ENCODE measurements at regions of chr16 and their contacts with region 1.

Region 1: DNA sequence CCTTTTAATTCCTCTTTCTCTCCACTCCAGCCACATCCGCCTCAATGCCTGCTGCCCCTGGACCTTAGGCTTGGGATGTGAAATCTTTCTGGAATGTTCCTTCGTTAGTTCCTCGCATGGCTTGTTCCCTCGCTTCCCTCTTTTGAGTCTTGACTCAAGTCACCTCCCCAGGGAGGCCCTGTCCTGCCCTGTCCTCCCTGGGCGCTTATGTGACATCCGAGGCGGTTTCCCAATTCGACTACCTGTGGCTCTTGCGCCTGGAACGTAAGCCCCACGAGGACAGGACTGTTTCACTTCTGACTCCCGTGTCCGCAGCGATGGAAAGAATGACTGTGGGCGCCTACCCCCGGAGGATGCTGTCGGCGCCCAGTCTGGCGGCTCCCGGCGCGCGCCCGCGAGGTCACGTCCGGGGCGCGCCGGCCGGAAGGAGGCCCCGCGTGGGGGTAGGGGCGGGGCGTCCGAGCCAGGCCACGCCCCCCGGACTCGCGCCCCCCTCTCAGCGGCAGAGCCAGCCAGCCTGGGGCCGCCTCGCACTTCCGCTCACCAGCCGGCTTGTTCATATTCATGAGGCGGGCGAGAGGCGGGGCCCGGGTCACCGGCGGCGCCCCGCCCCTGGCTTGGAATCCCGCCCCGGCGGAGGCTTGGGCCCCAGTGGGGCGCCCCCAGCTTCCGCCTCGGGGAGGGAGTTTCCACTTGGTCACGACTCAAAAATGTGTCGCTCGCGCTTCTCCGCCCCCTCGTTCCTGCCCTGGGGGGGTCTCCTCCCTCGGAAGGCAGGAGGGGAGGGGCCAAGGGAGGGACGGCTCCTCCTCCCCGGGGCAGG is 8.4 kb upstream of the GLIS2 start:
- DNase-seq: peak; percentile 98
- ATAC-seq: peak; percentile 86
- H3K4me3 ChIP-seq: peak overlapping the region; percentile 58 to 95 (median 72)
- H3K4me3 Mint-ChIP-seq: peak overlapping the region; percentile 96
- H3K27ac ChIP-seq: peak overlapping the region; percentile 89 to 91
- H3K27ac Mint-ChIP-seq: peak overlapping the region; percentile 96
- H3K4me1 ChIP-seq: peaks cover 14 to 38% of the 10 kb centered on the region in 2 donors
- H3K4me1 Mint-ChIP-seq: peaks cover 35% of the 10 kb centered on the region
- H3K27me3 ChIP-seq: peaks cover 0 to 2% (median 0%) of the 10 kb centered on the region in 4 experiments
- H3K27me3 Mint-ChIP-seq: no peaks in the 10 kb centered on the region
- CTCF ChIP-seq: no peak

Region 2: GRCh38 chr16:4239020-4239419 is 68.4 kb before region 1 on chr16:
- CTCF ChIA-PET with region 1: no interaction called
- POLR2A ChIA-PET with region 1: no interaction called
- intact Hi-C with region 1: no loop called
- DNase-seq: no peak
- ATAC-seq: no peak
- H3K4me3 ChIP-seq: no peak overlapping the region
- H3K4me3 Mint-ChIP-seq: no peak overlapping the region
- H3K27ac ChIP-seq: no peak overlapping the region
- H3K27ac Mint-ChIP-seq: no peak overlapping the region
- H3K4me1 ChIP-seq: no peaks in the 10 kb centered on the region
- H3K4me1 Mint-ChIP-seq: no peaks in the 10 kb centered on the region
- H3K27me3 ChIP-seq: peaks cover 0 to 12% (median 4%) of the 10 kb centered on the region in 4 experiments
- H3K27me3 Mint-ChIP-seq: peaks cover 18% of the 10 kb centered on the region
- CTCF ChIP-seq: no peak

Region 3: DNA sequence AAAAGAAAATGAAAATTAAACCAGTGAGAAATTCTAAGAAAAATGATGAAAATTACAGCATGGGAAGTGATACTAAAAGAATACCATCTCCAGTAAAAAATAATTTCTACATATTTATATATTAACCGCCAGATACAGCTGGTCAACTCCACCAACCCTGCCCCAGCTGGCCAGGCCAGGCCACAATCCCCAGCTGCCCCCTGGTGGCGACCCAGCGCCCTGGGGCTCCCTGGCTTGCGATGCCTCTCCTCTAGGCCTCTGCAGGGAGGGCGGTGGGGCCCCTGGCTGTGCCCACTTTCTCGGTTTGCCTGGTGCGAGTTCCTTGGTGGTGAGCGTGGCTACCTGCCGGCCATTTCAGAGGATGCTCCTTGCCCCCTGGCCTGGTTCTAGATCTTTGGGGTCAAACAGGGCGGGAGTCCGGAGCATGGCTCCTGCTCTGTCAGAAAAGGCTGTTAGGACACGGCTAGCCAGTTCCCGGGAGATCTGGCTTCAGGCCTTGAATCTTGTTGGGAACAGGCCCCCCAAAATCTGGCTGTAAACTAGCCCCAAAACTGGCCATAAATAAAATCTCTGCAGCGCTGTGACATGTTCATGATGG is 22.9 kb after region 1 on chr16:
- CTCF ChIA-PET with region 1: interaction called, 165 read pairs
- POLR2A ChIA-PET with region 1: no interaction called
- intact Hi-C with region 1: loop called (anchors 2 kb)
- DNase-seq: peak; percentile 74
- ATAC-seq: peak; percentile 72
- H3K4me3 ChIP-seq: no peak overlapping the region
- H3K4me3 Mint-ChIP-seq: no peak overlapping the region
- H3K27ac ChIP-seq: no peak overlapping the region
- H3K27ac Mint-ChIP-seq: no peak overlapping the region
- H3K4me1 ChIP-seq: peaks cover 14 to 18% of the 10 kb centered on the region in 2 donors
- H3K4me1 Mint-ChIP-seq: peaks cover 6% of the 10 kb centered on the region
- H3K27me3 ChIP-seq: peaks cover 0 to 24% (median 0%) of the 10 kb centered on the region in 4 experiments
- H3K27me3 Mint-ChIP-seq: peaks cover 3% of the 10 kb centered on the region
- CTCF ChIP-seq: peak; percentile 98

Region 4: GRCh38 chr16:4416200-4417032 is 109.0 kb after region 1 on chr16 and contains the start of gene CORO7:
- CTCF ChIA-PET with region 1: interaction called, 3 read pairs
- POLR2A ChIA-PET with region 1: interaction called, 4 read pairs
- intact Hi-C with region 1: loop called (anchors 1 kb)
- DNase-seq: peak; percentile 99
- ATAC-seq: peak; percentile 90
- H3K4me3 ChIP-seq: peak within 1 kb of the TSS; percentile 62 to 94 (median 78)
- H3K4me3 Mint-ChIP-seq: peak within 1 kb of the TSS; percentile 96
- H3K27ac ChIP-seq: peak within 1 kb of the TSS; percentile 91 to 95
- H3K27ac Mint-ChIP-seq: peak within 1 kb of the TSS; percentile 95
- H3K4me1 ChIP-seq: peaks cover 24 to 35% of the 10 kb centered on the region in 2 donors
- H3K4me1 Mint-ChIP-seq: peaks cover 31% of the 10 kb centered on the region
- H3K27me3 ChIP-seq: no peaks in the 10 kb centered on the region
- H3K27me3 Mint-ChIP-seq: no peaks in the 10 kb centered on the region
- CTCF ChIP-seq: no peak
- total RNA-seq, gene CORO7: 114 and 117 TPM in 2 replicates

Region 5: GRCh38 chr16:4538350-4539235 is 231.2 kb after region 1 on chr16 and contains the start of gene CDIP1:
- CTCF ChIA-PET with region 1: no interaction called
- POLR2A ChIA-PET with region 1: no interaction called
- intact Hi-C with region 1: loop called (anchors 5 kb)
- DNase-seq: peak; percentile 99
- ATAC-seq: peak; percentile 91
- H3K4me3 ChIP-seq: peak within 1 kb of the TSS; percentile 7 to 93 (median 73)
- H3K4me3 Mint-ChIP-seq: peak within 1 kb of the TSS; percentile 92
- H3K27ac ChIP-seq: peak within 1 kb of the TSS; percentile 87 to 95
- H3K27ac Mint-ChIP-seq: peak within 1 kb of the TSS; percentile 96
- H3K4me1 ChIP-seq: peaks cover 7 to 13% of the 10 kb centered on the region in 2 donors
- H3K4me1 Mint-ChIP-seq: peaks cover 14% of the 10 kb centered on the region
- H3K27me3 ChIP-seq: no peaks in the 10 kb centered on the region
- H3K27me3 Mint-ChIP-seq: no peaks in the 10 kb centered on the region
- CTCF ChIP-seq: peak; percentile 24
- total RNA-seq, gene CDIP1: 18.0 and 20.3 TPM in 2 replicates